ENCODE measurements at regions of chr12 and their contacts with region 1.

Region 1: DNA sequence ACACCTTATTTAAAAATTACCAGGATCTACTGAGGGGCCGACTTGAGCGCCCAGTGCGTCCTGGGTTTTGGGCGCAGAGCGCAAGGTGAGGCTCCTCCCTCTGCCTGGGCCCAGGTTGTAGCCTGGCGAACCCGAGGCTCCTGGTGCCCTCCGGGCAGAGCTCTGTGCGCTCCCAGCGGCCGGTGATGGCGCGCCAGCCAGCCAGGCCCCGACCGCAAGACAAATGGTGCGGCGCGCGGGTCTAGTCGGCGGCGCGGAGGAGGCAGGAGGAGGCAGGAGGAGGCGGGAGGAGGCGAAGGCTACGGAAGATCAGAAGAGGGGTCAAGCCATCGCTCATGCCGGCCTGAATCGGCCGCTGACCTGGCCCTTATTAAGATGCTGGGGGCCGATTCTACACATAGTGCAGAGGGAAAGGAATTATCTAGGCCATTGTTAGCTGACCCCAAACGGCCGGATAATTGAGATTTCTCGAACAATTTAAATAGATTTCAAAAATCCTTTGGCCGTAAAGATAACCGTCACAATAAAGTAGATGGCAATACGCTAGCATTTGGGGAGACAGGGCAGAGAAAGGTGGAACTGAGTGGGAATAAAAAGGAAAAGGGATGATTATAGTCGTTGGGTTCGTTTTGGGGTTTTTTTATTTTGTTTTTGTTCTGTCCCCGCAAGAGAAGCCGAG is 2.8 kb downstream of the TBX5 start:
- DNase-seq: peak in 4 of 5 donors; percentile 56 to 80 (median 75)
- ATAC-seq: peak; percentile 30 to 63 (median 62)
- H3K4me3 ChIP-seq: peak overlapping the region; percentile 6 to 88 (median 62)
- H3K27ac ChIP-seq: peak overlapping the region; percentile 69 to 96 (median 91)
- H3K4me1 ChIP-seq: peaks cover 0 to 39% (median 6%) of the 10 kb centered on the region in 12 donors
- H3K27me3 ChIP-seq: peaks cover 0 to 98% (median 3%) of the 10 kb centered on the region in 9 donors
- CTCF ChIP-seq: peak in 10 of 12 donors; percentile 9 to 44 (median 24)
- POLR2A ChIP-seq: no peak

Region 2: DNA sequence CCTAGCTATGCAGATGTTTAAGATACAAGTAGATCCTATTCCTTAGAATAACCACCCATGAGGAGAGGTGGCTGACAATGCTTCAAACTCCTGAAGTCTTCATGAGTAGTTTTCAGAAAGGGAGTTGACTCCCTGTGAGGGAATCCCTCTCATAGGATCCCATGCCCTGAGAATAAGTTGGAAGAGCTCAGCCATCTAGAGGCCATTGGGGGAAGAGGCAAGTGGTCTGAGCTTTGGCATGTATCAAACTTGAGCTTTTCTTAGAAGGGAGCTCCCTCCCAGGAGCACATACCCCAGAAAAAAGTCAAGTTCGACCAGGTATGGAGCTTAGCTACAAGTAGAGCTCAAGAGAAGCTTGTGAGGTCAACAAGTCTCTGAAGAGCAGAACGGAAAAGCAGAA is 271.3 kb before region 1 on chr12:
- intact Hi-C with region 1: no loop called
- DNase-seq: no peak
- ATAC-seq: no peak
- H3K4me3 ChIP-seq: no peak overlapping the region
- H3K27ac ChIP-seq: no peak overlapping the region
- H3K4me1 ChIP-seq: no peaks in the 10 kb centered on the region
- H3K27me3 ChIP-seq: peaks cover 0 to 7% (median 0%) of the 10 kb centered on the region in 9 donors
- CTCF ChIP-seq: peak in 6 of 12 donors; percentile 7 to 28 (median 9)
- POLR2A ChIP-seq: no peak

Region 3: GRCh38 chr12:114166362-114166761 is 236.8 kb before region 1 on chr12:
- intact Hi-C with region 1: loop called in 2 of 10 experiments (anchors 10 kb)
- DNase-seq: peak in 4 of 5 donors; percentile 29 to 38 (median 30)
- ATAC-seq: peak; percentile 48 to 82 (median 74)
- H3K4me3 ChIP-seq: no peak overlapping the region
- H3K27ac ChIP-seq: no peak overlapping the region
- H3K4me1 ChIP-seq: peaks cover 0 to 3% (median 0%) of the 10 kb centered on the region in 12 donors
- H3K27me3 ChIP-seq: peaks cover 0 to 8% (median 0%) of the 10 kb centered on the region in 9 donors
- CTCF ChIP-seq: peak; percentile 42 to 77 (median 66)
- POLR2A ChIP-seq: no peak

Region 4: GRCh38 chr12:114174326-114174725 is 228.8 kb before region 1 on chr12:
- intact Hi-C with region 1: loop called in 2 of 10 experiments (anchors 10 kb)
- DNase-seq: peak in 2 of 5 donors; percentile 49 to 67
- ATAC-seq: peak; percentile 48 to 83 (median 72)
- H3K4me3 ChIP-seq: no peak overlapping the region
- H3K27ac ChIP-seq: no peak overlapping the region
- H3K4me1 ChIP-seq: peaks cover 0 to 17% (median 0%) of the 10 kb centered on the region in 12 donors
- H3K27me3 ChIP-seq: no peaks in the 10 kb centered on the region
- CTCF ChIP-seq: no peak
- POLR2A ChIP-seq: no peak

Region 5: DNA sequence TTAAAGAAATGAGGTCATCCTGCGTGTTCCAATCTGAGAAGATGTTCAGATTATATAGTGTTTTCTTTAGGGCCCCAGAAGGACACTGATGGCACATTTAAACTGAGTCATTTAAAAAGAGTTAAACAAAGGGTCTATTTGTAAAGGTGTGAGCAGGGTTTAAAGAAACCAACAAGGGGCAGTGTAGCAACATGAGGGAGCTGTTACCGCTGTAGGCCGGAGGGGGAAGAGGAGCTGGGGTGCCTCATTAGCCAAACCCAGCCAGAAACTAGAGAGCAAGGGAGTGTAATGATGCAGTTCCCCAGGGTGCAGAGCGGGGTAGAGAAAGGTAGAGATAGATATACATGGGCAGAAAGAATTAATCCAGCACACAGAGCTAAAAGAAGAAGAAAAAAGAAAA is 157.6 kb before region 1 on chr12:
- intact Hi-C with region 1: loop called in 1 of 10 experiments (anchors 10 kb)
- DNase-seq: no peak
- ATAC-seq: peak in 3 of 4 donors; percentile 41 to 59 (median 48)
- H3K4me3 ChIP-seq: no peak overlapping the region
- H3K27ac ChIP-seq: no peak overlapping the region
- H3K4me1 ChIP-seq: peaks cover 0 to 2% (median 0%) of the 10 kb centered on the region in 12 donors
- H3K27me3 ChIP-seq: peaks cover 0 to 15% (median 3%) of the 10 kb centered on the region in 9 donors
- CTCF ChIP-seq: peak in 8 of 12 donors; percentile 8 to 39 (median 26)
- POLR2A ChIP-seq: no peak

Region 6: DNA sequence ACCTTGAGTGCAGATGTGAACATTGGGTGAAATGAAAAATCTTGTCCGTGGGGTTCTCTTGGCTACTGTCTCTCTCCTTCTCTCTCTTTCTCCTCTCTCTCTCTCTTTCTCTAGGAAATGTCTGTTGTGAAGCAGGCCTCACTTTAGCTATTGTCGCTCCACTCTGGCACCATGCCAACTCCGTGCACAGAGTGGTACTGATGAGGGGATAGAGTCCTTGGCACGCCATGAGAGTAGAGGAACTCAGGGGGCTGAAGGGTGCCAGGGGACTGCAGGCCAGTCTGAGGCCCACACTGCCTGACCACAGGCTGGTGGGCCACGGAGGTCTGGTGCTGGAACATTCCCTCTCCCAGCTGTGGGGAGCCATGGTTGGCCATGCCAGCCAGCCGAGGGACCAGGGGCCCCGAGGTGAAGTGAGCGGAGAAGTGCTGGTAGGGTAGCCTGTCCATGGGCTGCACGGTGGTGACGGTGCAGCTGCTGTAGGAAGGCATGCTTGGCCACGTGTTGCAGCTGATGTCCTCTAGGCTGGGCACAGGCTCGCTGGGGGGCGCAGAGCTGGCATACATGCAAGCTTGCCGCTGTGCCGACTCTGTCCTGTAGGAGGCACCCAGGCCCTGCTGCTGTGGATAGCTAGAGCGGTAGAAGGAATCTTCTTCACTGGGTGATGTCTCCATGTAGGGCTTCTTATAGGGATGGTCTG is 47.6 kb before region 1 on chr12:
- intact Hi-C with region 1: loop called in 4 of 10 experiments (anchors 5 to 10 kb)
- DNase-seq: peak in 4 of 5 donors; percentile 33 to 69 (median 52)
- ATAC-seq: peak; percentile 58 to 88 (median 84)
- H3K4me3 ChIP-seq: no peak overlapping the region
- H3K27ac ChIP-seq: peak overlapping the region in 4 of 12 donors; percentile 11 to 38 (median 28)
- H3K4me1 ChIP-seq: peaks cover 0 to 13% (median 0%) of the 10 kb centered on the region in 12 donors
- H3K27me3 ChIP-seq: no peaks in the 10 kb centered on the region
- CTCF ChIP-seq: peak in 10 of 12 donors; percentile 28 to 63 (median 43)
- POLR2A ChIP-seq: no peak

Region 7: GRCh38 chr12:114361545-114361944 is 41.6 kb before region 1 on chr12:
- intact Hi-C with region 1: loop called in 4 of 10 experiments (anchors 5 to 10 kb)
- DNase-seq: no peak
- ATAC-seq: peak; percentile 38 to 62 (median 55)
- H3K4me3 ChIP-seq: no peak overlapping the region
- H3K27ac ChIP-seq: peak overlapping the region in 6 of 12 donors; percentile 24 to 74 (median 58)
- H3K4me1 ChIP-seq: peaks cover 0 to 25% (median 5%) of the 10 kb centered on the region in 12 donors
- H3K27me3 ChIP-seq: no peaks in the 10 kb centered on the region
- CTCF ChIP-seq: no peak
- POLR2A ChIP-seq: no peak

Measured in heart left ventricle (tissue), 16 donors.